SK-N-SH (cell line): ENCODE measurements at regions of chr17 and their contacts with region 1.

Region 1: GRCh38 chr17:77054936-77055335 is 85.8 kb upstream of the SEC14L1 start:
- DNase-seq: peak; percentile 87
- H3K4me3 ChIP-seq: no peak overlapping the region
- H3K27ac ChIP-seq: no peak overlapping the region
- H3K4me1 ChIP-seq: peaks cover 0 to 18% of the 10 kb centered on the region in 2 experiments; a peak in 1 of 4 replicates
- H3K27me3 ChIP-seq: peaks cover 49% of the 10 kb centered on the region
- CTCF ChIP-seq: no peak
- EP300 ChIP-seq: 0 out of 4 replicates have a peak, but pooled peaks of 1 of the 2 experiments have one; percentile 45
- RAD21 ChIP-seq: 0 out of 2 replicates have a peak, but pooled peaks have one; percentile 8

Region 2: DNA sequence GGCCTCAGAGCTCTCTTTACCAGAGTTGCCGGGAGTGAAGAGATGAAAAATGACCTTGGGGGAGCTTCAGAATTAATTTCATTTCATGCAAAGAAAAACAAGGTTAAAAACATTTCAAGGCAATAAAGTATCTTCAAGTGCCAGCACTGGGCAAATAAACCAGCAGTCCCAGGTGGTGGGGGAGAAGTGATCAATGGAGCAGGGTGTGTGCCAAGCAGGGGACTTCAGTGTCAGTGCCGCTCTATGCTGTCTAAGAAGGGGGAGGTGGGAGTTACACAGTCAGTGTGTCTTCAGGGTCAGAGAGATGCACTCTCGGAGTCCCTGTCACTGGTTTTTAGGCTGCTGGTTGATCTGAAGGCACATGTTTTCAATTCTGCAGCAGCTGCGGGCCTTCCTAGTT is 244.0 kb before region 1 on chr17:
- CTCF ChIA-PET with region 1: interaction called, 124 read pairs
- POLR2A ChIA-PET with region 1: no interaction called
- DNase-seq: peak; percentile 66
- H3K4me3 ChIP-seq: no peak overlapping the region
- H3K27ac ChIP-seq: no peak overlapping the region; a peak in 1 of 4 replicates
- H3K4me1 ChIP-seq: peaks cover 0 to 3% of the 10 kb centered on the region in 2 experiments; a peak in 1 of 4 replicates
- H3K27me3 ChIP-seq: no peaks in the 10 kb centered on the region
- CTCF ChIP-seq: no peak
- EP300 ChIP-seq: no peak
- RAD21 ChIP-seq: no peak

Region 3: DNA sequence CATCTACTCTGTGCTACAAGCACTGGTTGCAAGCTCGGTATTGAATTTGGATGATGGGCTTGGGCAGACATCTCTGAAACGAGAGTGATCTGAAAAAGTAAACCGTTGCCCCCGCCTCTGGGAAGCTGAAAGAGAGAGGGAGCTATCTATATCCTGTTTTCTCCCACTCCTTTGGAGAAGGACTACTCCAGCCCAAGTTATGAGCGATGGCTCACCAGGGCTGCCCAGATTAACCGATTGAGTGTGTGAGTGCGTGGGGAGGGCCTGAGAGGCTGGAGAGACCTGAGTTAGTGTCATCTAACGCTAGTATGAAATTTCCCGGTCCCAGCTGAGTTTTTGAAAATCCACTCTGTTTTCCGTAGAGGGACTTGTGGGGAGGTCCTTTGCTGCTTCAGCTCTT is 175.2 kb before region 1 on chr17:
- CTCF ChIA-PET with region 1: interaction called, 26 read pairs
- POLR2A ChIA-PET with region 1: no interaction called
- DNase-seq: no peak
- H3K4me3 ChIP-seq: no peak overlapping the region
- H3K27ac ChIP-seq: no peak overlapping the region
- H3K4me1 ChIP-seq: no peaks in the 10 kb centered on the region
- H3K27me3 ChIP-seq: no peaks in the 10 kb centered on the region
- CTCF ChIP-seq: no peak
- EP300 ChIP-seq: no peak
- RAD21 ChIP-seq: no peak

Region 4: GRCh38 chr17:76924345-76925342 is 130.3 kb before region 1 on chr17:
- CTCF ChIA-PET with region 1: interaction called, 14 read pairs
- POLR2A ChIA-PET with region 1: no interaction called
- DNase-seq: peak; percentile 69
- H3K4me3 ChIP-seq: no peak overlapping the region
- H3K27ac ChIP-seq: no peak overlapping the region
- H3K4me1 ChIP-seq: peaks cover 0 to 12% of the 10 kb centered on the region in 2 experiments; a peak in 1 of 4 replicates
- H3K27me3 ChIP-seq: no peaks in the 10 kb centered on the region
- CTCF ChIP-seq: no peak
- EP300 ChIP-seq: no peak
- RAD21 ChIP-seq: no peak

Region 5: DNA sequence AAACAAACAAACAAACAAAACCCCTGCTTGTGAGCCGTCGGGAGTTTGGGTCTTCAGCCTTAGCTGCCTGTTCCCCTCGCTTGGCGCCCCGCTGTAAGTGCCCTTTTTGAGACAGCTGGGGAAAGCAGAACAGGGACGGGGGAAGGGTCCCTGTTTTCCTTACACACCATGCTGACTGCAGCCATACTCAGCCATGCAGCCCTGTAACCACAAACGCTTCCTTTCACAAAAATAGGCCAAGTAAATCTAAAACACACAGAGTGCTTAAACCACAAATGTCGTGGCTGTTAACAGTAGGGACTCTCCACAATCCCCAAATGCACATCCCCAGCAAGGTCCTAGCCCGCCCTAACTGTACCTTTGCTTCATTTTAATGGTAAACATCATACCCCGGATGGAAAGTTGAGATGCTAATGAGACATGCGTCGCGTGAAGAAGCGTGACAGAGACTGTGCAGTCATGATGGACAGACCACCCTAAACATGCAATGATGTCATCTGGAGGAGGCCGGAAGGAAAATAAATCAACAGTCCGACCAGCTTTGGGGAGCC is 56.9 kb before region 1 on chr17:
- CTCF ChIA-PET with region 1: interaction called, 31 read pairs
- POLR2A ChIA-PET with region 1: no interaction called
- DNase-seq: peak; percentile 12
- H3K4me3 ChIP-seq: no peak overlapping the region
- H3K27ac ChIP-seq: no peak overlapping the region
- H3K4me1 ChIP-seq: peaks cover 8 to 9% of the 10 kb centered on the region in 2 experiments; a peak in 2 of 4 replicates
- H3K27me3 ChIP-seq: no peaks in the 10 kb centered on the region
- CTCF ChIP-seq: no peak
- EP300 ChIP-seq: no peak
- RAD21 ChIP-seq: no peak

Region 6: DNA sequence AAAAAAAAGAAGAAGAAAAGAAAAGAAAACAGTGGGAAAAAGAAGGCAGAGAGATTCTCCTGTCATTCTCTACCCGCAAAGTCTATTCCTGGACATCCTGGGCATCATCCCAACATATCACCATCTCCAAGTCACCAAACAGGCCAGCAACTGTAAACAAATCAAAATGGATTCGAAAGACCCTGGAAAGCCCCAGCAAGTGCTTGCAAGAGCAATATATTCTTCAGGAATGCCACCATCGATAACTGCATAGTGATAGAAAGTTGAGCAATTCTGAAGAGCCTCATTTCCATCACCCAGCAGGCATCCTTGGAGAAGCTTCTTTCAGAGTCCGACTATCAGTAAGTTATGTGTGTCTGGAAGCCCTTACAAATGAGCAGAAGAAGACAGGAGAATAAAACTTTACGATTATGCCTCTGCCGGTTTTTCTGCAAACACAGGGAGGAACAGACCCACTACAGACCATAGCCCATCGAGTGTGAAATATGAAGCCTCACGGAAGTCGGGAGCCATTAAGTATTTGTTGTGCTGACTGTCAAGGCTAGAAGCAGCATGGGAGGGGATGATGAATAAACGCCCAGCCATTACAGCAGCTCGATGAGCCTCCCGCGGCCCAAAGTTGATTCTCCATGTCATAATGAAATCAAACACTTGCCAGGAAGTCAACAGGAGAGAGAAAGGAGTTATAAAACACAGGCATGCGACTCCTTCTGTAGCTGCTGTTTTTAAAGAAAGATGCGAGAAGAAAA is 21.4 kb after region 1 on chr17:
- CTCF ChIA-PET with region 1: interaction called, 270 read pairs
- POLR2A ChIA-PET with region 1: no interaction called
- DNase-seq: no peak
- H3K4me3 ChIP-seq: no peak overlapping the region
- H3K27ac ChIP-seq: no peak overlapping the region
- H3K4me1 ChIP-seq: no peaks in the 10 kb centered on the region; a peak in 1 of 4 replicates
- H3K27me3 ChIP-seq: peaks cover 29% of the 10 kb centered on the region
- CTCF ChIP-seq: no peak
- EP300 ChIP-seq: no peak
- RAD21 ChIP-seq: no peak

Region 7: GRCh38 chr17:77136420-77136767 is 81.5 kb after region 1 on chr17:
- CTCF ChIA-PET with region 1: no interaction called
- POLR2A ChIA-PET with region 1: no interaction called
- DNase-seq: no peak
- H3K4me3 ChIP-seq: no peak overlapping the region
- H3K27ac ChIP-seq: no peak overlapping the region
- H3K4me1 ChIP-seq: peaks cover 10 to 18% of the 10 kb centered on the region in 2 experiments; a peak in 3 of 4 replicates
- H3K27me3 ChIP-seq: no peaks in the 10 kb centered on the region
- CTCF ChIP-seq: no peak
- EP300 ChIP-seq: no peak
- RAD21 ChIP-seq: no peak